ENCODE measurements at regions of chr22 and their contacts with region 1.

Region 1: DNA sequence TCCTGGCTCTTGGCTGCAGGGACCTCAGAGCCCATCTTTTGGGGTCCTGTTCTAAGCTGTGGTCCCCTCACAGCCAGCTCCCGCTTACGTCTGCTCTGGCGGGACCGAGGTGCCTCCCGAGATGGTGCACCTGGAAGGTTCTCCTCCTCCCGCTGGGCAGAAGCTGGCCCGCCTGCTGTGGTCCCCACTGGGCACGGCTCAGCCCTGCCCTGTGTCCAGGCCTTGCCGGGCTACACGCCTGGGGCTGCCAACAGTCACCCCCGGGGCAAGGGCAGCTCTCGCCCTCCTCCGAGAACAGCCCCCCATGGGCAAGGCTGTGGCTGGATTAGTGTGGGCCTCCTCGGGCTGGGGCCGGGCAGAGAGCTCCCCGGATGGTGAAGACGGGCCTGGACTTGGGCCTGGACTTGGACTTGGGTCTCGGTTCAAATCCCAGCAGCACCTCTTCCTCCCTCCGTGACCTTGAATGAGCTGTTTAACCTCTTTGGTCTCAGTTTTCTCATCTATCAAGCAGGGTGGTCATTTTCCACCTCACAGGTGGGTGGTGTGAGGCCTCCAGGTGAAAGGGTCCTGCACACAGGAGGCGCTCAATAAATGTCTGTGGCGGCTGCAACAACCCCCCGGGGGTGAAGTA is 998 bp downstream of the BAIAP2L2 start:
- DNase-seq: no peak
- H3K4me3 ChIP-seq: no peak overlapping the region
- H3K4me3 Mint-ChIP-seq: no peak overlapping the region
- H3K27ac ChIP-seq: no peak overlapping the region
- H3K27ac Mint-ChIP-seq: no peak overlapping the region
- H3K4me1 ChIP-seq: no peaks in the 10 kb centered on the region
- H3K4me1 Mint-ChIP-seq: no peaks in the 10 kb centered on the region
- H3K27me3 ChIP-seq: no peaks in the 10 kb centered on the region
- H3K27me3 Mint-ChIP-seq: peaks cover 0 to 6% (median 5%) of the 10 kb centered on the region in 3 donors
- CTCF ChIP-seq: no peak

Region 2: DNA sequence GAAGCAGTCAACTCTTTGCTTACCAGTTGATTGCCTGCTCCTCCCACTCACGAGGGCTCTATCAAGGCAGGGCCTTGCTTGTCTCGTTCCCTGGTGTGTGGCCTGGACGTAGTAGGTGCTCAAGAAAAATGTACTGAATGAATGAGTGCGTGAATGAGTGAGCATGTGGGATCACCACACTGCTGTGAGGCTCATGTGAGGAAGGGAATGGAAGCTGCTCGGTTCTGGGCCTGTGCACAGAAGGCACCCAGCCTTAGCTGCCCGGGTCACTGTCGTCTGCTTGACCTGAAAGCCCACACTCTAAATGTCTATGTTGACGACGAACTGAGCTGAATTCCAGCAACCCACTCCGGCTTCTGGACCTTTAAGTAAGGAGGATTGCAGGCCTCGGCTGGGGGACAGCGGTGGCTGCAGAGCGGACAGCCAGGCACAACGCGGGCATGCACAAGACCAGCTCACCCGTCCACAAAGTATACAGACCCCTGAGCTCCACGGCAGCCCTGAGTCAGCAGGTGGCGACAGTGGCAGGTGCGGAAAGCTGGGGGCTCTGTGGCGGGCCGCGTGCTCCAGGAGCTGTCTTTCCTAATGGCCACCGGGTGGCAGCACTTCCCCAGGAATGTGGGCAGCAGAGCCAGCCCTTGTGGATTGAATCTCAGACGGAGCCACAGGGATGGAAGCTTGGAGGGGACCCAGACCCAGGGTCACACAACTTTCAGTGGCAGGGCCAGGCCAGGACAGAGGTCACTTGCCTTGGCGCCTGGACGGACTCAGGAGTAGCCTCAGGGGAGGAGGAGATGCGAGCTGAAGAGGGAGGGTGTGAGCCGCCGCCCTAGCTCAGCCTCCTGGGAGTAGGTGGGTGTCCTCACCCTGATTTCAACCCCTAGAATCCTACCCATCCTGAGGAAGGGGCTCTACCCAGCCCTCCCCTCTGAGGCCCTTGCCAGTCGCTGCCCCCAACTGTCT is 57.3 kb before region 1 on chr22:
- intact Hi-C with region 1: loop called in 1 of 2 experiments (anchors 5 kb)
- DNase-seq: peak; percentile 60 to 75 (median 69)
- H3K4me3 ChIP-seq: no peak overlapping the region
- H3K4me3 Mint-ChIP-seq: no peak overlapping the region
- H3K27ac ChIP-seq: no peak overlapping the region
- H3K27ac Mint-ChIP-seq: no peak overlapping the region
- H3K4me1 ChIP-seq: peaks cover 9% of the 10 kb centered on the region in 2 donors
- H3K4me1 Mint-ChIP-seq: peaks cover 13% of the 10 kb centered on the region
- H3K27me3 ChIP-seq: peaks cover 0 to 3% of the 10 kb centered on the region in 2 donors
- H3K27me3 Mint-ChIP-seq: peaks cover 16 to 26% (median 19%) of the 10 kb centered on the region in 3 donors
- CTCF ChIP-seq: peak; percentile 94